Esophagus muscularis mucosa (tissue), 4 donors: ENCODE measurements at regions of chr14 and their contacts with region 1.

Region 1: GRCh38 chr14:91060351-91061055 is at the start of gene RPS6KA5:
- DNase-seq: peak; percentile 100
- H3K4me3 ChIP-seq: peak within 1 kb of the TSS; percentile 81 to 94 (median 90)
- H3K27ac ChIP-seq: peak within 1 kb of the TSS; percentile 98
- H3K4me1 ChIP-seq: peaks cover 12 to 68% (median 63%) of the 10 kb centered on the region in 4 donors
- H3K27me3 ChIP-seq: no peaks in the 10 kb centered on the region
- CTCF ChIP-seq: peak; percentile 11 to 35 (median 27)
- EP300 ChIP-seq: no peak
- POLR2A ChIP-seq: peak; percentile 92
- total RNA-seq, gene RPS6KA5: 30.8 to 40.6 (median 35.0) TPM

Region 2: DNA sequence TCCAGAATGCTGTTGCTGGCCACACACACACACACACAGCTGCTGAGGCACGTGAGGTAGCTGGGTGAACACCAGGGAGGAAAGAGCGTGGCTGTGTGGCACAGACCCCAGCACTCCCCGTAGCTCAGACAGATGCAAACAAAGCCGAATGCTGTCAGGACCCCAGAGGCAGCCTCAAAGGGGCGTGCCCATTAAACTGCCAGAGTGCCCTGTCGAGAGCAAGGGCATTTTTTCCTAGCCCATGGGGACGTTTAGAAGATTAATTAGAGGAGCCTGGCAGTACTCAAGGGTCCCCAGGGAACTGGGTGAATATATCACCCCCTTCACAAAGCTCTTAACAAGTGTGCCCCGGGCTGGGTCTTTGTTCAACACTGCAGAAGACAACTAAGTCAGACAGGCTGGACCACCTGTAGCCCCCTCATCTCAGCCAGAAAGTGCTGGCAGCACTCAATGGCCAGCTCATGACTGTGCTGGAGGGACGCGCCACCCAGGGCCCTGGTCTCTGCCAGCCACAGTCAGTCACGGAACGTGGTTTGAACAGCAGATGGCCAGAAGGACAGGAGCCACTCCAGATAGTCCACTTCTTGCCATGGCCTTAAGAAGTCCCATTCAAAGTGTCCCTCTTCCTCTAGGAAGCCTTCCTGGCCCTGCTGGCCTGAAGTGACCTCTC is 281.8 kb before region 1 on chr14:
- intact Hi-C with region 1: no loop called
- DNase-seq: no peak
- H3K4me3 ChIP-seq: no peak overlapping the region
- H3K27ac ChIP-seq: no peak overlapping the region
- H3K4me1 ChIP-seq: no peaks in the 10 kb centered on the region
- H3K27me3 ChIP-seq: no peaks in the 10 kb centered on the region
- CTCF ChIP-seq: no peak
- EP300 ChIP-seq: no peak
- POLR2A ChIP-seq: no peak

Region 3: DNA sequence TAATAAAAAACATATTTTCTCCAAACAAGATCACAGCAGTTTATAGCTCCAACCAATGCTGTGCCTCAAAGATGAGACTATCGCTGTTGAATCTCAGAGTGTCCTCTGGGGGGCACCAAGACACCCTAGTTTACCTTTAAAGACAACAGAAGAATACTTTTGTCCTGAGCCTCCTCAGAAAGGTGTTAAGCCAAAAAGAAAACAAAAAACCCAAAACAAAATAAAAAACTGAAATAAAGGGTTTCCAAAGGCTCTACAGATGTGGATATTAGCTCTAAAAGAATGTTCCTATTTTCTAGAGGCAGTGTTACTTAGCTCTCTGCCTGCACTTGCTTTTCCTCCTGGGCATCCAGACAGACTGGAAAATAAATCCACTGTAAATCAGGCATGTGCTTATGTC is 157.4 kb before region 1 on chr14:
- intact Hi-C with region 1: loop called (anchors 5 kb)
- DNase-seq: no peak
- H3K4me3 ChIP-seq: no peak overlapping the region
- H3K27ac ChIP-seq: peak overlapping the region in 2 of 4 donors; percentile 37 to 53
- H3K4me1 ChIP-seq: peaks cover 0 to 8% (median 3%) of the 10 kb centered on the region in 4 donors
- H3K27me3 ChIP-seq: no peaks in the 10 kb centered on the region
- CTCF ChIP-seq: peak; percentile 67 to 84 (median 70)
- EP300 ChIP-seq: no peak
- POLR2A ChIP-seq: no peak

Region 4: DNA sequence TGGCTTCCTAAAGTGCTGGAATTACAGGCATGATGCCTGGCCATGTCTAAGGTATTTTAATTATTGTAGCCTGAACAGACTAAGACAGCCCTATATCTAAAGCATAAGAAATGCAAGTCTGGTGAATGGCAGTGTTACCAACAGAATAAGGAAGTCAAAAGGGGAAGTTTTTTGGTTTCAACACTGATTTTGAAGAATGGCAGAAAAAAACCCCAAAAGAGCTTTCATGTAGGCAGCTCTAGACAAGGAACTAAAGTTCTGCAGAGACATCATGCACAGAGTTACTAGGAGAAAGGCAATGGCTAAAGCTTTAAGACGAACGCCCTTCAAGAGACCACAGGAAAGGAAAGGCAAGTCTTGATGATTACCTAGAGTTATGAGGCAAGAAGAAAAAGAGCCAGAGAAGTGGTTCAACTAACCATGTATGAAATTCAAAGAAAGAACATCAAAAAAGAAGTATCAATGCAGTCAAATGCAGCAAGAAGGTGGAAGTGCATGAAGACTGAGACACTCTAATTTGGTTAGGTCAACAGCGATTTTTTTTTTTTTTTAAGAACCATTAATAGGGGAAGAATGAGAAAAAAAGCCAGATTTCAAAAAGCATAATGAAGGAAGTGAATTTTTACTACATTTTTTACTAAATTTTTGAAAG is 50.9 kb before region 1 on chr14:
- intact Hi-C with region 1: loop called (anchors 5 kb)
- DNase-seq: no peak
- H3K4me3 ChIP-seq: no peak overlapping the region
- H3K27ac ChIP-seq: peak overlapping the region; percentile 10 to 54 (median 46)
- H3K4me1 ChIP-seq: peaks cover 0 to 95% (median 81%) of the 10 kb centered on the region in 4 donors
- H3K27me3 ChIP-seq: no peaks in the 10 kb centered on the region
- CTCF ChIP-seq: no peak
- EP300 ChIP-seq: no peak
- POLR2A ChIP-seq: no peak

Region 5: GRCh38 chr14:91170504-91171121 is 110.1 kb after region 1 on chr14:
- intact Hi-C with region 1: loop called (anchors 2 kb)
- DNase-seq: peak; percentile 93
- H3K4me3 ChIP-seq: peak overlapping the region; percentile 1 to 21 (median 14)
- H3K27ac ChIP-seq: peak overlapping the region; percentile 82 to 87 (median 85)
- H3K4me1 ChIP-seq: peaks cover 41 to 65% (median 56%) of the 10 kb centered on the region in 4 donors
- H3K27me3 ChIP-seq: no peaks in the 10 kb centered on the region
- CTCF ChIP-seq: no peak
- EP300 ChIP-seq: no peak
- POLR2A ChIP-seq: no peak

Region 6: GRCh38 chr14:91286530-91286937 is 226.0 kb after region 1 on chr14:
- intact Hi-C with region 1: loop called (anchors 10 kb)
- DNase-seq: no peak
- H3K4me3 ChIP-seq: no peak overlapping the region
- H3K27ac ChIP-seq: no peak overlapping the region
- H3K4me1 ChIP-seq: peaks cover 5 to 23% (median 12%) of the 10 kb centered on the region in 4 donors
- H3K27me3 ChIP-seq: no peaks in the 10 kb centered on the region
- CTCF ChIP-seq: peak; percentile 81 to 88 (median 83)
- EP300 ChIP-seq: no peak
- POLR2A ChIP-seq: no peak

Region 7: DNA sequence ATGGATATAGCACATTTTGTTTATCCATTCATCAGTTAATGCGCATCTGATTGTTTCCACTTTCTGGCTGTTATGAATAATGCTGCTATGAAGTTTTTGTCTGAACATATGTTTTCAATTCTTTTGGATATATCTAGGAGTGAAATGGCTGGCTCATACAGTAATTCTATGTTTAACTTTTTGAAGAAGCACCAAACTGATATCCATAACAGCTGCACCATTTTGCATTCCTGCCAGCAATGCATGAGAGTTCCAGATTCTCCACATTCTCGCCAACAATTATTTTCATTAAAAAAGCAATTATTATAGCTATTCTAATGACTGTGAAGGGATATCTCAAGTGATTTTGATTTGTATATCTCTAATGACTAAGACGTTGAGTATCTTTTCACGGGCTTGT is 539.5 kb after region 1 on chr14:
- intact Hi-C with region 1: no loop called
- DNase-seq: no peak
- H3K4me3 ChIP-seq: no peak overlapping the region
- H3K27ac ChIP-seq: no peak overlapping the region
- H3K4me1 ChIP-seq: no peaks in the 10 kb centered on the region
- H3K27me3 ChIP-seq: peaks cover 0 to 4% (median 0%) of the 10 kb centered on the region in 4 donors
- CTCF ChIP-seq: no peak
- EP300 ChIP-seq: no peak
- POLR2A ChIP-seq: no peak